AG04449 (cell line): ENCODE measurements at regions of chr6 and their contacts with region 1.

Region 1: GRCh38 chr6:128725271-128726233 is 157.4 kb upstream of the LAMA2 start:
- DNase-seq: no peak
- H3K4me3 ChIP-seq: no peak overlapping the region
- CTCF ChIP-seq: peak; percentile 48

Region 2: DNA sequence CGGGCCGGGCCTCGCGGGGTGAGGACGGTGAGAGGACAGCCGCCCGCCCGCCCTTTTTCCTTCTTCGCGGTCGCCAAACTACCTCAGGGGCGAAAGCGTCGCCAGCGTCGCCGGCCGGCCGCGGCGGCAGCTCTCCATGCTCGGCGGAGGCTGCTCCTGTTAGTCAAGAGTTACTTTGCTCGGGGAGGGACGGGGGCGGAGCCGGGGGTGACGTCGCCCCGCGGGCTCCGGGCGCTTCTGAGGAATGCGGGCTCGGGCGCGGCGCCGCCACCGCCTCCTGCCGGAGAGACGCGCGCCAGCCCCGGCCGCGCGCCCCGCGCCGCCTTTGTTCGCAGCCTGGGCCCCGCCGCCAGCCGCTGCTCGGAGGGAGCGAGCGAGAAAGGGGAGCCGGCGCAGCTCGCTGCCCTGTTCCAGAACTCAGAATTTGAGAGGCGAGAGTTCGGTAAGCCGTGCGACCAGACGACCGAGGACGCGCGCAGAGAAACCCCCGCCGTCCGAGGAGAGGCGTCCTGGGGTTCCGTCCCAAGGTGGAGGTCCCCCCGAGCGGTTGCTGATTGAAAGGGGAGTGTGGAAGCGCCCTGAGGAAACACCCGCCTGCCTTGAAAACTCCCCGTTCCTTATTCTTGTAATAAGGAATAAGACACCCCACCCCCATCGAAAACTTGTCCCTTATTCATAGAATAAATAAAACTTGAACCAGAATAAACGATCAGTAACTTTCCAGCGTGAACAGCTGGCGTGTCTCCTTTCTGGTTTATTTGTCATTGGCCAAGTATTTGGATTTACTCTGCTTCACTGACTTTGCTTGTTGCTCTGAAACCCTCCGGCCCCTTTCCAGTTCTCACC is 204.9 kb before region 1 on chr6 and contains the start of gene PTPRK:
- CTCF ChIA-PET with region 1: interaction called, 16 read pairs
- POLR2A ChIA-PET with region 1: interaction called, 3 read pairs
- DNase-seq: no peak
- H3K4me3 ChIP-seq: peak within 1 kb of the TSS; percentile 90
- CTCF ChIP-seq: peak; percentile 28

Region 3: DNA sequence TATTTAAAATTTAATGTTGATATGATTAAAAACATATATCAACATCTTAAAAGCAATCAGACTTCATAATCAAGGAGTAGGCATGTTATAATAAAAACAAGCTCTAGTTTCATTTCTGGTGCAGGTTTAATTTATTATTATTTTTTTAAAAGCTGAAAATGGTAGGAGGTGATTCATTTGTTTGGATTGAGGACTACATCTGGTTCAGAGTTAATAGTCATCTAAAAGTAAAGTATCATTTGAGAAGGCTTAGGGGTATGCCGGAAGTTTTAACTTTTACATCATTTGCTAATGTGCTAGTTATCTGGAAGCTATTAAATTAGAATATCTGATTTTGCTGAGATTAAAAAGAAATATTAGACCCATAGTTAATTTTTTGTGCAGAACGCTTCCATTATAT is 12.1 kb before region 1 on chr6:
- CTCF ChIA-PET with region 1: interaction called, 15 read pairs
- POLR2A ChIA-PET with region 1: no interaction called
- DNase-seq: no peak
- H3K4me3 ChIP-seq: no peak overlapping the region
- CTCF ChIP-seq: no peak

Region 4: GRCh38 chr6:129262661-129263060 is 537.1 kb after region 1 on chr6:
- CTCF ChIA-PET with region 1: no interaction called
- POLR2A ChIA-PET with region 1: no interaction called
- DNase-seq: no peak
- H3K4me3 ChIP-seq: no peak overlapping the region
- CTCF ChIP-seq: no peak